ENCODE measurements at regions of chr14 and their contacts with region 1.

Region 1: GRCh38 chr14:91350813-91351511 is 66.7 kb downstream of the CCDC88C start:
- DNase-seq: peak; percentile 91
- ATAC-seq: peak; percentile 66
- H3K4me3 ChIP-seq: peak overlapping the region; percentile 38
- H3K27ac ChIP-seq: peak overlapping the region; percentile 98
- H3K4me1 ChIP-seq: peaks cover 78% of the 10 kb centered on the region
- H3K27me3 ChIP-seq: no peaks in the 10 kb centered on the region
- CTCF ChIP-seq: no peak
- EP300 ChIP-seq: peak; percentile 75 to 83
- POLR2A ChIP-seq: peak; percentile 62
- RAD21 ChIP-seq: no peak

Region 2: DNA sequence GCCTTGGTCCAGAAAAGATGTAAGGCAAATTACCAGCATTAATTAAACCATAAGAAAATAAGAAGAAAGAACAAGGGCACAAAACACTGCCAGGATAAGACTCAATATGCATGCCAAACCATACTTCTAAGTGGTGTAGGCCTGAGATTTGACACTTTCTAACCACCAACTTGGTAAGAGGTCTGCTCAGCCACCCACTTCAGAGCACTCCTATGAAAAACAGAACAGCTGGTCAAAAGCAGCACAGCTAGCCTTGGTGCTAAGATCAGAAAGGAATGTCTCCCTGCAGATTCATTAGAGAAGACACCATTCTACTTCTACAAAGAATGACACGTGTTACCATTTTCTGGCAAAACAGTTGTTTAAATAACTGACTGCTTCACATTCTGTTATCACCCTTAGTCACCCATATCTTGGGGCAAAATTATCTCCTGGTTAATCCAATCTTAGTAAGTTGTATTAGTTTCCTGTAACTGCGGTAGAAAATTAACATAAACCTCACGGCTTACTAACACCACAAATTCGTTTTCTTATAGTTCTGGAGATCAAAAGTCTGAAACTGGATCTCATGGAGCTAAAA is 303.7 kb before region 1 on chr14:
- CTCF ChIA-PET with region 1: no interaction called
- POLR2A ChIA-PET with region 1: no interaction called
- RAD21 ChIA-PET with region 1: no interaction called
- SMC1A ChIA-PET with region 1: no interaction called
- in situ Hi-C with region 1: no loop called
- intact Hi-C with region 1: no loop called
- DNase-seq: no peak
- ATAC-seq: peak; percentile 85
- H3K4me3 ChIP-seq: no peak overlapping the region
- H3K27ac ChIP-seq: no peak overlapping the region
- H3K4me1 ChIP-seq: no peaks in the 10 kb centered on the region
- H3K27me3 ChIP-seq: no peaks in the 10 kb centered on the region
- CTCF ChIP-seq: no peak
- EP300 ChIP-seq: no peak
- POLR2A ChIP-seq: no peak
- RAD21 ChIP-seq: no peak

Region 3: DNA sequence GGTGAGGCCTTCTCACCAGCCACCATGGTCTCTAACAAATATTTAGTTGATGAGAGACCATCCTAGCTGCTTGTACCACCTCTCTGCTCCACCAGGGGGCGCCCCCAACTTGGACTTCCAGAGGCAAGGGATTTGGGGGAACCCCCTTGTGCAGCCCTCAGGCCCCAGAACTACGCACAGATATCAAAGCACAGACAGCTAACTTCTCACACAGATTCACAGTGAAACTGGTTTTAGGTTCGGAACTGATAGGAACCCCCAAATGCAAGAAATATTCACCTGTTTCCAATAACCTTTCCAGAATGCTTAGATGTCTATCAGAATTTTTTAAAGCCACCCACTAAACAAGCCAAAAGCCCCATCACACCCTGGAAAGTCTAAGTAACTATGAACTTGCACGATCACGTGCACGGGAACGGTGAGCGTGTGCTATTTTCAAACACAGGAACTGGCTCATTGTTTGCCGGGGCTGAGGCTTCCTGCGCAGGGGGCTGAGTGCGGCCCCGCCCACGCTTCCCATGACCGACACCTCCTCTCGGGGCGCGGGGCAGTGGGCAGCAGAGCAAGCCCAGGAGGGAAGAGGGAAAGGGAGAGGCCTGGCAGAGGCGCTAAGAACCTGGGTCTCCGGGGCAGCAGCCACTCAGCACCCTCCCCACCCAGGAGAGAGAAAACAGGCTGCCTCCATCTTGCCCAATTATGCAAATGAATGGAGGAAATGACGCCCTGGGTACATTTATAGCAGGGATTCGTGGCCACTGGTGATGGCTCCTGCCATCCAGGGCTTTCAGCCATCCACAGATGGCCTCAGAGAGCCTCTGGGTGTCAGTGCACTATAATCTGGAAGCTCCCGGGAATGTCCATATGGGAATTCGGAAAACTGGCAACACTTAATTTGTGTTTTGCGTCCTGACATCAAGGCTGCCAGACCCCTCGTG is 27.0 kb before region 1 on chr14:
- CTCF ChIA-PET with region 1: interaction called, 47 read pairs
- POLR2A ChIA-PET with region 1: interaction called, 8 read pairs
- RAD21 ChIA-PET with region 1: interaction called, 42 read pairs
- SMC1A ChIA-PET with region 1: interaction called, 33 read pairs
- in situ Hi-C with region 1: no loop called
- intact Hi-C with region 1: loop called (anchors 1 kb)
- DNase-seq: peak; percentile 75
- ATAC-seq: peak; percentile 89
- H3K4me3 ChIP-seq: peak overlapping the region; percentile 11; the same call in 1 of the 2 replicates
- H3K27ac ChIP-seq: peak overlapping the region; percentile 87
- H3K4me1 ChIP-seq: peaks cover 39% of the 10 kb centered on the region
- H3K27me3 ChIP-seq: no peaks in the 10 kb centered on the region
- CTCF ChIP-seq: peak; percentile 95 to 97 (median 96)
- EP300 ChIP-seq: peak; percentile 29 to 30; a peak in 2 of 4 replicates
- POLR2A ChIP-seq: peak; percentile 66
- RAD21 ChIP-seq: peak; percentile 98

Region 4: DNA sequence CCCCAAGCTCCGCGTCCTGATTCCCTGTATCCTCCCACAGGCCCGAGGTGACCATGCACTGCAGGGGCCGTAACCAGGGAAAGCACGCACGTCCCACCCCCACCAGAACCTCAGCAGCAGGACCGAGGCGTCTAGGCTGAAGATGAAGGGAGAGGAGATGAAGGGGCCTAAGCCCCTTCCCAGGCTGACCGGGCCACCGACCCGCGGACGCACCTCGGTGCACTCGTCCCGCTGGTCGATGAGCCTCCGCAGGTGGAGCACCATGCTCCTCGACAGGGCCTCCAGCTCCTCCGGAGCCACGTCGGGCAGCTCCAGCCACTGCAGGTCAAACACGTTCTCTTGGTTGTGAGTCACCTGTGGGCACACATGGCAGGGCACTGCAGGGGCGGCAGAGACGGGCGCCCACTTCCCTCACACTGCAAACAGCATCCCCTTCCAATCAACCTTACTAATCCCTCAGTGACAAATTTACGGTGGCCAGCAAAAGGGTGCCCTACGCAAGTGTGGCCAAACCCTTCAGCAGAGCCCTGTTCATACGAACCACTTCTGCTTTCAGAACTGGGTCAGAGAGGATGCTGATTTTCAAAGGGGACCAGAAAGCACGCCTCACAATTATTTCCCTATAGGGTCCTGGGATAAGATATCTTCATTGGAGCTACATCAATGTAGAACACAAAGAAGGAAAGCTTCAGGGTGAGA is 11.1 kb before region 1 on chr14:
- CTCF ChIA-PET with region 1: interaction called, 12 read pairs
- POLR2A ChIA-PET with region 1: interaction called, 9 read pairs
- RAD21 ChIA-PET with region 1: interaction called, 7 read pairs
- SMC1A ChIA-PET with region 1: interaction called, 25 read pairs
- in situ Hi-C with region 1: no loop called
- intact Hi-C with region 1: no loop called
- DNase-seq: no peak
- ATAC-seq: no peak
- H3K4me3 ChIP-seq: no peak overlapping the region
- H3K27ac ChIP-seq: no peak overlapping the region
- H3K4me1 ChIP-seq: peaks cover 1% of the 10 kb centered on the region
- H3K27me3 ChIP-seq: no peaks in the 10 kb centered on the region
- CTCF ChIP-seq: no peak
- EP300 ChIP-seq: no peak
- POLR2A ChIP-seq: peak; percentile 15; the same call in 1 of the 2 replicates
- RAD21 ChIP-seq: no peak

Region 5: DNA sequence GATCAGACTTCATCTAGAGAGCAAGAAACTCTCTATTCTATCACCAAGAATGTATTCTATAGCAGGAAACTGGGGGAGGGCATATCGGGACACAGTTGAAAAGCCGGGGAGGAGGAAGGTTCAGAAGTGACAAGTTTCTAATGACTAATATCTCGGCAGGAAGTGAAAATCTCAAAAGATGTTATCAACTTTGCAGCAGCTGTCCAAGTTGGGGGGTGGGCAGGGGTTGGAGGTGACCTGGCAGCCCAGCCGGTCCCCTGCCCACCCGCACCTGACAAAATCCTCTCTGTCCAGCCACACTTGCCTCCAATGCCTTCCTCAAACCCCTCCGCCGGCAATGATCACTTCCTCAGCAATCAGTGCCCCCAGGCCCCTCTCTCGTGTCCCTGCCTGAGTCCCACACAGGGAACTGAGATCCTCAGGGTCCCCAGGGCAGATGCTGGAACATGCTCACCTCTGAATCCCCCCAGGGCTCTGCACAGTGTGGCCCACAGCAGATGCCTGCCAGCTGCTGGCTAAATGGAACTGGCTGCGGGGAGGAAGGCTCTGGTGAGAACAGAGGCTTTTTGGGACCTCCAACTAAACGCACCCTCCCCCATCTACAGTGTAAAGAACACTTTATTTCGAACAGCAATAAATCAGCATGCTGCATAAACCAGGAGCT is 22.8 kb after region 1 on chr14:
- CTCF ChIA-PET with region 1: interaction called, 48 read pairs
- POLR2A ChIA-PET with region 1: interaction called, 37 read pairs
- RAD21 ChIA-PET with region 1: interaction called, 79 read pairs
- SMC1A ChIA-PET with region 1: interaction called, 349 read pairs
- in situ Hi-C with region 1: no loop called
- intact Hi-C with region 1: no loop called
- DNase-seq: peak; percentile 80
- ATAC-seq: peak; percentile 70
- H3K4me3 ChIP-seq: peak overlapping the region; percentile 41
- H3K27ac ChIP-seq: peak overlapping the region; percentile 99
- H3K4me1 ChIP-seq: peaks cover 96% of the 10 kb centered on the region
- H3K27me3 ChIP-seq: no peaks in the 10 kb centered on the region
- CTCF ChIP-seq: no peak
- EP300 ChIP-seq: peak; percentile 92 to 96
- POLR2A ChIP-seq: no peak
- RAD21 ChIP-seq: peak; percentile 26; the same call in 1 of the 2 replicates

Region 6: DNA sequence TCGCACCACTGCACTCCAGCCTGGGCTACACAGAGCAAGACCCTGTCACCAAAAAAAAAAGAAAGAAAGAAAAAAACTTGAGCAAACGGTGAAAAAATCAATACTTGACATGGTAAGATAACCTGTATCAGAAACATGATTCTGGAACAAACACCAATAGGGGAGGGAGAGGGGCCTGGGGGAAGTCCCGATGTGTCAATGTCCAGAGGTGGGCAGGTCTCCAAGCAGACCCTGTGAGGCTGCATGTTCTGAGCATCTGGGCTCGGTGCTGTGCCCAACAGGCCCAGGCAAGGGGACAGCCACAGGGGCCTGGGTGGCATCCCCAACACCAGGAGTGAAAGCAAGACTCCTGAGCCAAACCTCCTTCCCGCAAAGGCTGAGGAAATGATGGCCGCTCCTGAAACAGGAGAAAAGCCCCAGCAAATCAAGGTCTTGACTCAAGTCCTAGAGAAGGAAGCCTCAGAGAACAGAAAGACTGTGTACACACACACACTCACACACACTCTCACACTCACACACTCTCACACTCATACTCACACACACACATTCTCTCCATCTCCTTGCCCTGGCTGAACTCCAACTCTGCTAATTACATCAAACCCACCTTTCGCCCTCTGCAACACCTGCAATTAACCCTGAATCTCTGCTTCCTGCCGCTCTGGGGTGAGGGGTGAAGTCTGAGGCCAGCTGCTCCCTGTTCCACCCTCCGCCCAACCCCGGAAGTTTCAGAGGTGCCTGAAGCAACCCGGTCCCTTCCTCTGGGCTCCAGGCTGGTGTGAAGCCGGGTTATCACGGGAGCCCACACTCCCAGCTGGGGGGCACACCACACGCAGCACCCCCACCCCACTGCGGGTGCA is 46.2 kb after region 1 on chr14:
- CTCF ChIA-PET with region 1: interaction called, 15 read pairs
- POLR2A ChIA-PET with region 1: interaction called, 9 read pairs
- RAD21 ChIA-PET with region 1: interaction called, 30 read pairs
- SMC1A ChIA-PET with region 1: interaction called, 36 read pairs
- in situ Hi-C with region 1: no loop called
- intact Hi-C with region 1: no loop called
- DNase-seq: no peak
- ATAC-seq: peak; percentile 83
- H3K4me3 ChIP-seq: peak overlapping the region; percentile 66
- H3K27ac ChIP-seq: peak overlapping the region; percentile 67
- H3K4me1 ChIP-seq: peaks cover 64% of the 10 kb centered on the region
- H3K27me3 ChIP-seq: no peaks in the 10 kb centered on the region
- CTCF ChIP-seq: no peak
- EP300 ChIP-seq: no peak
- POLR2A ChIP-seq: peak; percentile 53; the same call in 1 of the 2 replicates
- RAD21 ChIP-seq: no peak